Adrenal gland (tissue), 19 donors: ENCODE measurements at regions of chr6 and their contacts with region 1.

Region 1: GRCh38 chr6:152948150-152948768 is 34.6 kb downstream of the FBXO5 start:
- DNase-seq: no peak
- H3K4me3 ChIP-seq: no peak overlapping the region
- H3K27ac ChIP-seq: no peak overlapping the region
- H3K4me1 ChIP-seq: no peaks in the 10 kb centered on the region
- H3K27me3 ChIP-seq: peaks cover 13% of the 10 kb centered on the region
- CTCF ChIP-seq: peak; percentile 46 to 68 (median 60)
- POLR2A ChIP-seq: no peak

Region 2: DNA sequence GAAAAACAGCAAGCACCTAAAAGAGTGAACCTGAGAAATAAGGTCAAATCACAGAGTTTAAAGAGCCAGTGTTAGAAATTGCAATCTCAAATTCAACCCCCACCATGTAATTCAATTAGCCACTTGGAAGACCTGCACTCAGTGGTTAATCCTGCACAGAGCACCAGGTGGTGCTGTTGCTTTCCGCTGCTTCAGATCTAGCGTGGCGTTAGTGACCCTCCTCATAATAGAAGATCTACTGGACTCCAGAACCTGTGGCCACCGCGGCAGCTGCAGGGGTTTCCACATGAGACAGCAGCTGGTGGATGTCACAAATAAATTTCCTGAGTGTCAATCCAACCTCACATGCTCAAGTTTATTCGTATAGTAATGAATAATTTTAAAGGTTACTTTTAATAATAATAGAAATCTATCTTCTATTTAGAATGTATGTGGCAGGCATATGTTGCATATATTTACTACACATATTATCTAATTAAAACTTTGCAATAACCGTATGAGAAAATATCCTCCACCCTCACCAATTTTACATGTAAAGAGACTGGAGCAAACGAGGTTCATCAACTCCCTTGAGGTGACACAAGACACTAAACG is 395.5 kb before region 1 on chr6:
- intact Hi-C with region 1: loop called in 1 of 2 experiments (anchors 10 kb)
- DNase-seq: peak; percentile 50 to 89 (median 66)
- H3K4me3 ChIP-seq: no peak overlapping the region
- H3K27ac ChIP-seq: no peak overlapping the region
- H3K4me1 ChIP-seq: no peaks in the 10 kb centered on the region
- H3K27me3 ChIP-seq: no peaks in the 10 kb centered on the region
- CTCF ChIP-seq: peak; percentile 56 to 89 (median 80)
- POLR2A ChIP-seq: no peak

Region 3: DNA sequence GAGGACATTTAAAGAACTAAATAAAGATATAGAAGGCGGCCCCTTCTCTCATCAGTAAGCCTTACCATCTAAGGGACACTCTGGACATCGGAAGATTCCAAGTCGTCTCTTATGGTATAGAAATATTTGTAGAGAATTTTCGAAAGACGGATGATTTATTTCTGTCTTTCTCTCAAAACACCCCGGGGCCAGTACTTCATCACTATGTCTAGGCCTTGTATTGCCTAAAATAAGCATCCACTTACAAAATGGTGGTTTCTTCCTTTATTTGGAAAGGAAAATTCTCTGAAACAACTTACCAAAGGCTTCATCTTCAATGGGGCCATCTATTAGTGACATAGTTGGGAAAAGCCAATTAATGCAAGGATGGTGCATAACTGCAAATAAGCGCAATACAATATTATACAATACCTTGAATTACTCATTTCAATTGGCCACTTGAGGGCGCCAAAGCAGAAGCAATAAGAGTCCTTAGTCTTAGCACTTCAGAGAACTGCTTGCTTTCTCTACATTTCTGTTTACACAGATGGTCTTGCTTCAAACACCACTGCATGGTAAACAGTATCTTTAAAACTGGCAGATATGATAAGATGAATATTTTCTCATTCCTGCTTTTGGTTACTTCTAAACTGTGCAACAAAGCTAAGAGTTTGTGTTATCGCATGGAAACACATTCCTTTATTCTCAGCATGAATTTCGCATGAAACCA is 84.5 kb before region 1 on chr6:
- intact Hi-C with region 1: loop called (anchors 5 to 10 kb)
- DNase-seq: peak; percentile 51 to 86 (median 74)
- H3K4me3 ChIP-seq: no peak overlapping the region
- H3K27ac ChIP-seq: no peak overlapping the region
- H3K4me1 ChIP-seq: no peaks in the 10 kb centered on the region
- H3K27me3 ChIP-seq: no peaks in the 10 kb centered on the region
- CTCF ChIP-seq: peak; percentile 62 to 80 (median 69)
- POLR2A ChIP-seq: no peak